ENCODE measurements at regions of chr12 and their contacts with region 1.

Region 1: DNA sequence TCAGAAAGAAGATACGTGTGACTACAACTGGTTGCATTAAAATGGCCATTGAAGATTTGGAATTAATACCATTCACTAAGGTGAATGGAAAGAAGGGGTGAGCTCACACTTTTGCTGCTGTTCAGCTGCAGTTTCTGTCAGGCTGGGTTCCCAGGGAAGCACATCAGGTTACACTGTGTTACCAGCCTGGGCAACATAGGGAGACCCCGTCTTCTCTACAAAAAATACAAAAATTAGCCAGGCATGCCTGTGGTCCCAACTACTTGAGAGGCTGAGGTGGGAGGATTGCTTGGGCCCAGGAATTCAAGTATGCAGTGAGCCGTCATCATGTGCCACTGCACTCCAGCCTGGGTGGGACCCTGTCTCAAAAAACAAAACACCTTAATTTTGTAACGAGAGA is 12.9 kb upstream of the ZCCHC8 start:
- DNase-seq: no peak
- ATAC-seq: no peak
- H3K4me3 Mint-ChIP-seq: no peak overlapping the region
- H3K27ac Mint-ChIP-seq: peak overlapping the region in 2 of 10 donors; percentile 0 to 35
- H3K4me1 Mint-ChIP-seq: peaks cover 5 to 16% (median 6%) of the 10 kb centered on the region in 4 donors
- H3K27me3 Mint-ChIP-seq: no peaks in the 10 kb centered on the region

Region 2: GRCh38 chr12:122526683-122527477 is 13.2 kb after region 1 on chr12 and contains the starts of genes KNTC1 and RSRC2:
- POLR2A ChIA-PET with region 1: interaction called, 11 read pairs
- DNase-seq: peak; percentile 81 to 99 (median 98)
- ATAC-seq: peak; percentile 88 to 91
- H3K4me3 Mint-ChIP-seq: peak within 1 kb of the TSS in 1 of 10 donors; percentile 71
- H3K27ac Mint-ChIP-seq: peak within 1 kb of the TSS in 1 of 10 donors; percentile 38
- H3K4me1 Mint-ChIP-seq: peaks cover 12 to 34% (median 26%) of the 10 kb centered on the region in 4 donors
- H3K27me3 Mint-ChIP-seq: no peaks in the 10 kb centered on the region
- polyA plus RNA-seq, gene KNTC1: 1.4 to 3.6 (median 2.0) TPM
- polyA plus RNA-seq, gene RSRC2: 18.5 to 47.5 (median 23.6) TPM

Measured in naive thymus-derived CD8-positive, alpha-beta T cell (primary cell).